ENCODE measurements at regions of chr16 and their contacts with region 1.

Region 1: GRCh38 chr16:22001591-22001990 is 675 bp upstream of the PDZD9 start:
- DNase-seq: no peak
- ATAC-seq: no peak
- H3K4me3 ChIP-seq: peak overlapping the region in 2 of 3 experiments; percentile 8 to 62; a peak in 2 of 6 replicates
- H3K27ac ChIP-seq: no peak overlapping the region
- H3K4me1 ChIP-seq: peaks cover 66% of the 10 kb centered on the region
- H3K27me3 ChIP-seq: peaks cover 0 to 11% of the 10 kb centered on the region in 2 experiments; a peak in 1 of 5 replicates
- CTCF ChIP-seq: no peak
- EP300 ChIP-seq: no peak
- POLR2A ChIP-seq: no peak
- RAD21 ChIP-seq: no peak

Region 2: DNA sequence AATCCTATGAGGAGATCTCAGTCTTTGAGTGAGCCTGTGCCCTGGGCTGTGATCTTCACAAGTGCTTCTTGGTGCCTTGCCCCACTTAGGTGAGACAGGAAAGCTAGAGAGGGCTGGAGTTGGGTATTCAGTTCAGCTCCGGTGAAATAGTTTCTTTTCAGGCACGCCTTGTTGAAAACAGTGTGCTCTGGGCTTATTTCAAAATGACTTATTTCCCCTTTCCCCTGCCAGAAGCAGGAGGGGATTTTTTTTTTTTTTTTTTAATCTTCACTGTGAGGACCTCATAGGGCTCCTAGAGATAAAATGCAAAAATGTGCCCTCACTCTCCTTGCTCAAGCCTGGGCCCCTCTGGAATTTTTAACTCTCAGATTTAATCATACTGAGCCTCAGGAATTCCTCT is 33.6 kb after region 1 on chr16:
- CTCF ChIA-PET with region 1: no interaction called
- POLR2A ChIA-PET with region 1: no interaction called
- in situ Hi-C with region 1: no loop called
- intact Hi-C with region 1: no loop called
- DNase-seq: no peak
- ATAC-seq: no peak
- H3K4me3 ChIP-seq: no peak overlapping the region
- H3K27ac ChIP-seq: no peak overlapping the region
- H3K4me1 ChIP-seq: peaks cover 19% of the 10 kb centered on the region
- H3K27me3 ChIP-seq: no peaks in the 10 kb centered on the region
- CTCF ChIP-seq: no peak
- EP300 ChIP-seq: no peak
- POLR2A ChIP-seq: no peak
- RAD21 ChIP-seq: no peak

Region 3: GRCh38 chr16:22077700-22078313 is 76.2 kb after region 1 on chr16:
- CTCF ChIA-PET with region 1: interaction called, 169 read pairs
- POLR2A ChIA-PET with region 1: interaction called, 9 read pairs
- in situ Hi-C with region 1: loop called (anchors 5 kb)
- intact Hi-C with region 1: loop called (anchors 1 kb)
- DNase-seq: peak; percentile 62
- ATAC-seq: peak; percentile 85
- H3K4me3 ChIP-seq: no peak overlapping the region
- H3K27ac ChIP-seq: no peak overlapping the region
- H3K4me1 ChIP-seq: no peaks in the 10 kb centered on the region
- H3K27me3 ChIP-seq: no peaks in the 10 kb centered on the region
- CTCF ChIP-seq: peak; percentile 92
- EP300 ChIP-seq: no peak
- POLR2A ChIP-seq: no peak
- RAD21 ChIP-seq: peak; percentile 91

Region 4: GRCh38 chr16:22098405-22099255 is 97.0 kb after region 1 on chr16:
- CTCF ChIA-PET with region 1: interaction called, 18 read pairs
- POLR2A ChIA-PET with region 1: interaction called, 4 read pairs
- in situ Hi-C with region 1: loop called (anchors 5 kb)
- intact Hi-C with region 1: loop called (anchors 1 kb)
- DNase-seq: peak; percentile 89
- ATAC-seq: peak; percentile 95
- H3K4me3 ChIP-seq: peak overlapping the region in 1 of 3 experiments; percentile 25; a peak in 1 of 6 replicates
- H3K27ac ChIP-seq: no peak overlapping the region
- H3K4me1 ChIP-seq: peaks cover 29% of the 10 kb centered on the region
- H3K27me3 ChIP-seq: peaks cover 0 to 15% of the 10 kb centered on the region in 2 experiments; a peak in 3 of 5 replicates
- CTCF ChIP-seq: peak; percentile 95
- EP300 ChIP-seq: no peak
- POLR2A ChIP-seq: no peak
- RAD21 ChIP-seq: peak; percentile 71

Measured in HepG2 (cell line).